A549 (cell line): ENCODE measurements at regions of chr19 and their contacts with region 1.

Region 1: GRCh38 chr19:39110263-39110967 is 15.2 kb upstream of the PAK4 start:
- DNase-seq: peak; percentile 72 to 95
- ATAC-seq: peak; percentile 47 to 73; a peak in 5 of 6 replicates
- H3K4me3 ChIP-seq: no peak overlapping the region
- H3K27ac ChIP-seq: peak overlapping the region; percentile 89 to 90
- H3K4me1 ChIP-seq: peaks cover 40% of the 10 kb centered on the region
- CTCF ChIP-seq: peak; percentile 99
- EP300 ChIP-seq: no peak
- POLR2A ChIP-seq: no peak
- RAD21 ChIP-seq: peak; percentile 91

Region 2: DNA sequence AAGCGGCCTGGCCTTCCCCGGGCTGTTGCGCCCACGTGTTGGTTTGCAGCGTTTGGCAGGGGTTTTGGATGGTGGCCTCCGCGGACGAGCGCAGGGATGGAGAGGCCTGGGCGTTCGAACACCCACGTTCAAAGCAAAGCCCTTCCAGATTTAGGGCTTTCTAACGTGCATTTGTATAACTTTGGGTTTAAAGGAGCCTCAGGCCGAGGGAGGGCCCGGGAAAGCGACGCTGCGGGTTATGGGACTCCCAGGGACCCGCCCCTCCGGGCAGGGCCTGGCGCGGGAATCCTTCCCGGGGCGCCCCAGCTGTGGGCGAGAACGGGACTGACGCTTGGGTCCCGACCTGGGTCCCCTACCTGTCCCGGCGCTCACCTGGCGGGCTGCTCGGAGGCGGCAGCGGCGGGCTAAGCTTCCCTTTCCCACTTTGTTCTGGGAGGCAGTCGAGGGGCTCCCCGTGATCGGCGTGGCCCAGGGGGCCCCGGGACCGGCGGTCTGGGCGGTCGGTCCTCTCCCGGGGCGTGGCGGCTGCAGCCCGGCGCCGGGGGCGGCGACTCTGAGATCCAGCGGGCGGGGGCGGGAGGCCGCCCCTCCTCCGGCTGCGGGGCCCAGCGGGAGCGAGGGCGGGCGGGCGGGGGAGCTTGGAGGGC is 135.1 kb before region 1 on chr19 and contains the start of gene FBXO17:
- CTCF ChIA-PET with region 1: interaction called, 25 read pairs
- POLR2A ChIA-PET with region 1: interaction called, 11 read pairs
- DNase-seq: peak; percentile 84 to 87
- ATAC-seq: peak; percentile 83
- H3K4me3 ChIP-seq: peak within 1 kb of the TSS; percentile 51
- H3K27ac ChIP-seq: peak within 1 kb of the TSS; percentile 91 to 94
- H3K4me1 ChIP-seq: peaks cover 51% of the 10 kb centered on the region
- CTCF ChIP-seq: no peak; the same call in 2 of the 3 replicates
- EP300 ChIP-seq: 0 out of 5 replicates have a peak, but pooled peaks of 1 of the 2 experiments have one; percentile 6
- POLR2A ChIP-seq: peak; percentile 41
- RAD21 ChIP-seq: 0 out of 5 replicates have a peak, but pooled peaks have one; percentile 11 to 16
- polyA plus RNA-seq, gene FBXO17: 68.1 and 73.1 TPM in 2 replicates

Region 3: DNA sequence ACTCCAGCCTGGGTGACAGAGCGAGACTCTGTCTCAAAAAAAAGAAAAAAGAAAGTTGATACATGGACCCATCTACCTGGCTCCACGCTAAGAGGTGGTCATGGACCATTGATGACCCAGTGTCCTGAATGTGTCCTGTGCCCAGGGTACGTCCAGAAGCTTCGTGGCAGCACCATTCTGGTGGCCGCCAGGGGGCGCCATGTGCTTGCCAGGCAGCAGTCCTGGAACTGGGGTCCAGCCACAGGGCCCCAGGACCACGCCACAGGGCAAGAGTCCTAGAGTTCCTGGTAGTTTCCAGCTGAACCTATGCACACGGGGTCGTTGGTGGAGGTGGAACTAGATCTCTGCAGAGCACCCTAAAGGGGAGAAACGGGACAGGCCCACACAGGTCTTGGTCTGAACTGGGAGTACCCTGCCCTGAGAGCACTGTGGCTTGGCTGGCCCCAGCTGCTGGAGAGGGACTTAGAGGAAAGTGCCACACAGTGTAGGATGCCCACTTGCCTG is 58.1 kb before region 1 on chr19:
- CTCF ChIA-PET with region 1: interaction called, 144 read pairs
- POLR2A ChIA-PET with region 1: no interaction called
- DNase-seq: peak; percentile 75 to 87
- ATAC-seq: peak; percentile 85 to 96
- H3K4me3 ChIP-seq: no peak overlapping the region
- H3K27ac ChIP-seq: peak overlapping the region; percentile 54 to 71
- H3K4me1 ChIP-seq: peaks cover 22% of the 10 kb centered on the region
- CTCF ChIP-seq: peak; percentile 99
- EP300 ChIP-seq: no peak
- POLR2A ChIP-seq: no peak
- RAD21 ChIP-seq: peak; percentile 98 to 99

Region 4: DNA sequence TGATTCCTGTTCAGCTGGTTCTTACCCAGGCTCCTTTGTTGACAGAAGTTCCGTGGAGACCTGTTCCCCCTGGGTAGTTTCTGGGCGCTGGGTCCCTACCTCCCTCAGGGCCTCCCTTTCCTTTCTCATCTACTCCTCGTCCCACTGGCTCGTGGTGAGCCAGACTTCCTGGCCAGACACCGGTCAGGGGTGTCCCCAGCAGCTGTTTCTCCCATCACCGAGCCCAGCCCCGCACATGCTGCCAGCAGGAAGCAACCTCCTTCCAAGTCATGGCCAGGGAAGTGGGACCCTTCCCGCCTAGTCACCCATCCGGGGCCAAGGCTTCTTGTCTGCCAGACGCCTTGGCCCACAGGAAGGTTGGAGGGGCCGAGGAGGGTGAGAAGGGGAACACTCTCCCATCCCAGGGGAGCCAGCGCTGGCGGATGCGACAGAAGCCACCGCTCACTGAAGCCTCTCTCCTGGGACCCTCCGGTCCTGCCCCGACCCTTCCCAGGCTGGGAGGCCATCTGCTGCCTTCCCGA is 20.9 kb after region 1 on chr19:
- CTCF ChIA-PET with region 1: interaction called, 224 read pairs
- POLR2A ChIA-PET with region 1: interaction called, 8 read pairs
- DNase-seq: no peak
- ATAC-seq: no peak
- H3K4me3 ChIP-seq: no peak overlapping the region
- H3K27ac ChIP-seq: 0 out of 6 replicates have a peak overlapping the region, but pooled peaks of 1 of the 2 experiments have one; percentile 3
- H3K4me1 ChIP-seq: peaks cover 46% of the 10 kb centered on the region
- CTCF ChIP-seq: no peak
- EP300 ChIP-seq: no peak
- POLR2A ChIP-seq: no peak
- RAD21 ChIP-seq: no peak

Region 5: GRCh38 chr19:39182174-39182505 is 71.7 kb after region 1 on chr19:
- CTCF ChIA-PET with region 1: interaction called, 36 read pairs
- POLR2A ChIA-PET with region 1: no interaction called
- DNase-seq: no peak
- ATAC-seq: peak; percentile 6 to 20; a peak in 4 of 6 replicates
- H3K4me3 ChIP-seq: no peak overlapping the region
- H3K27ac ChIP-seq: peak overlapping the region in 1 of 2 experiments; percentile 9; a peak in 2 of 6 replicates
- H3K4me1 ChIP-seq: no peaks in the 10 kb centered on the region
- CTCF ChIP-seq: no peak
- EP300 ChIP-seq: no peak
- POLR2A ChIP-seq: no peak
- RAD21 ChIP-seq: no peak

Region 6: DNA sequence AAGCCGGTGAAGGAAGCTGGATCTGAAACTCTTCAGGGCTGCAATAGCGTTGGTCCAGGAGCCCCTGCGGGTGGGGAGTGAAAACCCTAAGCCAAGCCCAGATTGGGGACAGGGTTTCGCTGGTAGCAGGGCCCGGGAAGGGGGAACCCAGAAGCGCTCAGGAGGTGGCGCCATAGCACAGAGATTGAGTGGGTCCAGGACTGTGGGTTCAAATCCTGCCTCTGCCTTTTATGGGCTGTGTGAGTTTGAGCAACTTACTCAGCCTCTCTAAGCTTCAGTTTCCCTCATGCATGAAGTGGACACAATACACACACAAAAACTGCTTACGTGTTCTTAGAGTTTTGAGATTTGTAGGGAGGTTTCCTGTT is 101.9 kb after region 1 on chr19:
- CTCF ChIA-PET with region 1: interaction called, 19 read pairs
- POLR2A ChIA-PET with region 1: no interaction called
- DNase-seq: peak in 1 of 2 experiments; percentile 76
- ATAC-seq: peak; percentile 90
- H3K4me3 ChIP-seq: no peak overlapping the region
- H3K27ac ChIP-seq: no peak overlapping the region
- H3K4me1 ChIP-seq: no peaks in the 10 kb centered on the region
- CTCF ChIP-seq: peak; percentile 84
- EP300 ChIP-seq: no peak
- POLR2A ChIP-seq: no peak
- RAD21 ChIP-seq: peak; percentile 93 to 98